Activated CD4-positive, alpha-beta T cell treated with anti-CD3 and anti-CD28 coated beads, Interleukin-2, amount 10 ng/mL, durations not matched to agents 24 days and 14 days (primary cell): ENCODE measurements at regions of chr5 and their contacts with region 1.

Region 1: DNA sequence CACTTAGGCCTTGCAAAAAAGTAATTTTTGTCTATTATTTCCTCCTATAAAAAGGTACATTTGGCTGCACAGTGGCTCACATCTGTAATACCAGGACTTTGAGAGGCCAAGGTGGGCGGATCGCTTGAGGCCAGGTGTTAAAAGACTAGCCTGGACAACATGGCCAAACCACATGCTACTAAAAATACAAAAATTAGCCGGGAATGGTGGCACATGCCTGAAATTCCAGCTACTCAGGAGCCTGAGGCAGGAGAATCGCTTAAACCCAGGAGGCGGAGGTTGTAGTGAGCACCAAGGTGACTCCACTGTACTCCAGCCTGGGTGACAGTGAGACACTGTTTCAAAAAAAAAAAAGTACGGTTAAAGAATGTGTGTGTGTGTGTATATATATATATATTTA is 15.7 kb downstream of the NUP155 start:
- DNase-seq: no peak
- H3K4me3 Mint-ChIP-seq: no peak overlapping the region
- H3K27ac Mint-ChIP-seq: no peak overlapping the region
- H3K4me1 Mint-ChIP-seq: peaks cover 2% of the 10 kb centered on the region
- H3K27me3 Mint-ChIP-seq: no peaks in the 10 kb centered on the region

Region 2: DNA sequence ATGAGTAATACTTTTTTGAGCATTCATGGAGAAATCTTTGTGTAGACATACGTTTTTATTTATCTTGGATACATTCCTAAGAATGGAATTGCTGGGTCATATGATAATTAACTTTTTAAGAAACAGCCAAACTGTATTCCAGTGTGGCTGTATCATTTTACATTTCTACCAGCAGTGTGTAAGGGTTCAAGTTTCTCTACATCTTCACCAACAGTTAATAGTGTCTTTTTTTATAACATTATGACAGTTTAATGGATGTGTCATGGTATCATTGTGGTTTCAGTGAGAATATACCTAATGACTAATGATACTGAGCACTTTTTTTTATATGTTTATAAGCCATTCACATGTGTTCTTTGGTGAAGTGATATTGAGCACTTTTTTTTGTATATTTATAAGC is 426.2 kb before region 1 on chr5:
- intact Hi-C with region 1: no loop called
- DNase-seq: no peak
- H3K4me3 Mint-ChIP-seq: no peak overlapping the region
- H3K27ac Mint-ChIP-seq: no peak overlapping the region
- H3K4me1 Mint-ChIP-seq: peaks cover 11% of the 10 kb centered on the region
- H3K27me3 Mint-ChIP-seq: no peaks in the 10 kb centered on the region

Region 3: DNA sequence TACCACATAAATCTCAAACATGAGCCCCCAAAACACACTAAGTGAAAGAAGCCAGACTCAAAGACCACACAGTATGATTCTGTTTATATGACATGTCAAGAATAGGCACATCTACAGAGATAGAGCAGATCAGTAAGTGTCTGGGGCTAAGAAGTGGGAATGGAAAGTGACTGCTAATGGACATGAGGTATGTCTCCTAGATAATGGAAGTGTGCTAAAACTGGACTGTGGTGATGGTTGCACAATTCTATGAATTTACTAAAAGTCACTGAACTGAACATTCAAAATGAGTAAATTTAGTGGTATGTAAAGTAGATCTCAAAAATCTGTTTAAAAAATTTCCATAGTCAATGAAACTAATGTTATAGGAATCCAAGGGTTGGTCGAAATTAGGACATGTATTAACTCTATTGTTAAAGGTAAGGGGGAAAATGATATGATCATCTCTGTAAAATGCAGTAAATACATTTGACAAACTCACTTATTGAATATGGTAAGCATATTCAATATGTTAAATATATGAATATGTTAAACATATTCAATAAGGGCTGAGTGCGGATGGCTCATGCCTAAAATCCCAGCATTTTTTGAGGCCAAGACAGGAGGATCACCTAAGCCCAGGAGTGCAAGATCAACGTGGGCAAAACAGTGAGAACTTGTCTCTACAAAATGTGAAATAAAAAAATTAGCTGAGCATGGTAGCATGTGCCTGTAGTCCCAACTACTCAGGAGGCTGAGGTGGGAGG is 36.0 kb before region 1 on chr5:
- intact Hi-C with region 1: loop called (anchors 5 kb)
- DNase-seq: no peak
- H3K4me3 Mint-ChIP-seq: no peak overlapping the region
- H3K27ac Mint-ChIP-seq: no peak overlapping the region
- H3K4me1 Mint-ChIP-seq: peaks cover 8% of the 10 kb centered on the region
- H3K27me3 Mint-ChIP-seq: no peaks in the 10 kb centered on the region

Region 4: DNA sequence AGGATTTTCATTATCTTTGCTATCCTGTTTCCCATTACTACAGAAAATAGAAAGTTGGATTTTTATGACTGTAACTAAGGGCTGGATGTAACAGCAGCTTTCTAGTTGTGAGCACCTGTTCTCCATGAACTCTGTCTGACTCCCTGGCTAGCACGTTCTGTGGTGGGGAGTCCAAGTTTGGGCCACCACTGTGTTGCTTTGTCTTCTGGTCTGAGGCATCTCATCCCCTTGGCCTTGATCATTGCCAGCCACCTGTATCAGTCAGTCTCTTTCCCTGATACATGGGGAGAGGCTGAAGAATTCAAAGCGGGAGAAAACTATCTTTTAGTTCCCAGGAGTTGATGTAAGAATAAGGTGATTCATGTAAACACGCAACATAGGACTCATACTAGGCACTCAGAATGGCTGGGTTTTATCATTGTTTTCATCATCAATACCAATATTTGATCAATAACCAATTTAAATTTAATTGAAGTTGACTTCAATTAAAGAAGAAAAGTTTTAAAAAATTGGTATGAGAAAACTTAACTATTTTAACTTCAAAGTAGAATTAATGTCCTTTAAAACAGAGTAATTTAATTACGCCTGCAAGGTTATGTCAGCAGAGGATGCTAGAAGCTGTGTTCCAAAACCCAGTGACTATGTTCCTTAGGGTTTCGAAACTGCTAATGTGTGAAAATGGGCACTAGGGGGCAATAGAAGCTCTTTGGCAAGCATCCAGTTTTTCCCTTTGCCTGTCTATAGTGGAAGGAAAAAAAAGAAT is 57.5 kb after region 1 on chr5:
- intact Hi-C with region 1: no loop called
- DNase-seq: peak; percentile 80
- H3K4me3 Mint-ChIP-seq: no peak overlapping the region
- H3K27ac Mint-ChIP-seq: no peak overlapping the region
- H3K4me1 Mint-ChIP-seq: no peaks in the 10 kb centered on the region
- H3K27me3 Mint-ChIP-seq: no peaks in the 10 kb centered on the region